IMR-90 (cell line): ENCODE measurements at regions of chr6 and their contacts with region 1.

Region 1: GRCh38 chr6:33417903-33418689 is at the start of gene CUTA:
- DNase-seq: peak; percentile 100
- ATAC-seq: peak; percentile 83
- H3K4me3 ChIP-seq: peak within 1 kb of the TSS; percentile 63
- H3K27ac ChIP-seq: peak within 1 kb of the TSS; percentile 98
- H3K4me1 ChIP-seq: peaks cover 19% of the 10 kb centered on the region
- H3K27me3 ChIP-seq: no peaks in the 10 kb centered on the region
- CTCF ChIP-seq: peak; percentile 20; the same call in 1 of the 2 replicates
- POLR2A ChIP-seq: no peak; the same call in 1 of the 2 replicates
- RAD21 ChIP-seq: no peak
- total RNA-seq, gene CUTA: 122 and 136 TPM in 2 replicates

Region 2: DNA sequence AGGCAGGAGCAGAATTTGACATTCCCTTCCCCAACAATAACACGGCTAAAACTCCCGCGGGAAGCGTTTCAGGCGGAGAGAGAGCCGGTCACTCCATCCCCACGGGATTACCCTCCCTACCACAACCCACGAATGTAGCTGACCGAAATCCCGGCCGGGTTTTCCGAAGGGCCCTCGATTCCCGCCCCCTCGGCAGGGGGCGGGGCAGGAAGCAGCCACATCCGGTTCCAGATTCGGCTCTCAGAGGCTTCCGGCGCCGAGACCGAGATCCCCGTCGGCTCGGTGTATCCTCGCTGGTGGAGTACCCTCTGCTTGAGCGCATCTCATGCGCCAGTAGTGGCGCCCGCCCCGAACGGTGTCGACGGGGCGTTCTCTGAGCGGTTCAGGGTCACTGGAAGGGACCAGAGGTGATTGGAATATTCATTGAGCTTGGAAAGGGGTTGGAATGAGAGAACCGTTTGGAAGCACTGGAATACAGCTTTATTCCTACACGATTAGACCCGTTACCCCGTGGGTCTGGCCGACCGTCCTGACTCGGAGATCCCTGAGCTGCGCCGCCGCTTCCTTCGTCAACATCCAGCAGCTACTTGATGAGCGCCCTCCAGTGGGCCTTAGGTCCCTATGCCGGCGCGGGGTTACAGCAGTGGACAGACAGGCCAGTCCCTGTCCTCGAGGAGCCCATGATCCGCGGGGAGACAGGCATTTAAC is 118.7 kb before region 1 on chr6:
- CTCF ChIA-PET with region 1: no interaction called
- POLR2A ChIA-PET with region 1: no interaction called
- dilution Hi-C with region 1: no loop called
- in situ Hi-C with region 1: no loop called
- intact Hi-C with region 1: loop called (anchors 5 kb)
- DNase-seq: peak; percentile 88
- ATAC-seq: peak; percentile 70
- H3K4me3 ChIP-seq: peak overlapping the region; percentile 78
- H3K27ac ChIP-seq: peak overlapping the region; percentile 87
- H3K4me1 ChIP-seq: no peaks in the 10 kb centered on the region
- H3K27me3 ChIP-seq: no peaks in the 10 kb centered on the region
- CTCF ChIP-seq: peak; percentile 82
- POLR2A ChIP-seq: peak; percentile 91
- RAD21 ChIP-seq: peak; percentile 57